ENCODE measurements at regions of chr6 and their contacts with region 1.

Region 1: GRCh38 chr6:13711733-13712598 is at the start of gene RANBP9:
- DNase-seq: peak; percentile 96
- total RNA-seq, gene RANBP9: 33.9 to 36.9 TPM

Region 2: GRCh38 chr6:13668291-13668928 is 43.6 kb before region 1 on chr6:
- intact Hi-C with region 1: no loop called
- DNase-seq: no peak

Region 3: DNA sequence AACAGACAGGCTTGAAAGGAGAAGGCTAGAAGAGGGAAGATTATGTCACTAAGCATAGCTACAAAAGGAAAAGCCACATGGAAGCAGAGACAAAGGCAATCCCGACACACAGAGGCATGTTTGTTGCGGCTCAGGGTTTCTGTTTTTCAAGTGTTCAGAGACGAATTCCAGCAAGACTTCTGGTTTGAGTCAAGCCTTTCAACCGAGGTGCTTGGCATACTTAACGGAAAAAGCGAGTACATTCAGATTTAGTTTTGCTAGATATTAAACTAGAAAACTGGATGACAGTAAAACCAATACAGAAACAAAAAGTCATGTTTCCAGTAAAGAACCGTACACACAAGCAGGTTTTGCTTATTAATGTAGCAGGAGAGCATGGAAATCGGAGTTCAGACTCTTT is 75.2 kb after region 1 on chr6:
- intact Hi-C with region 1: loop called in 1 of 2 experiments (anchors 10 kb)
- DNase-seq: no peak

Region 4: DNA sequence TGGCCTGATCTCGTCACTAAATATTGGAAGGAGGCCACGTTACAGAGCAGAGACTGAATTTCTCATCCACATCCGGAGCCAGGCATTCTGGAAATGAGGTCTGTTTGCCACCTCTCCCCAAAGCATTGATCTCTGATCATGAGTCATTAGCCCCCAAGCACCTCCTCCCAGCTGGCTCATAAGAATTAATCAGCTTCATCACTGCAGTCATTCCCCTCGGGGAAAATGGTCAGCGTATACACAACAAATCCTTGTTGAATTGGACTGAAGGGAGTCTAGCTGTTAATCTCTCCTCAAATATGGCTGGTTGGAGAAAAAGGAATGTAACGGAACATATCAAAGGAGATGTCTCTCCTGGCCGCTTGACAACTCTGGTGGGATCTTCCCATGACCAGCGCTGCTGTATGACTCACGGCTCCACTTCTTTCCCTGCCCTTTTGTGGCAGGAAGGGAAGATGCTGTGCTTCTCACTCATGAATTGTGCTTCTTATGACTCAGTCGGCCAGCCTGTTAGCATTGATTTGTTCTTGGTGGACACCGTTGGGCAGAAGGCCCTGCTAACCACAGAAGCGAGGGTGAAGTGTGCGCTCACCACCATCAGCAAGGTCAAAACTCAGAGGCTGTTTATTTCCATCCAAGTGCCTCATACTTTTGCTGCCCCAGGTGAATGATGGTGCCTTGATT is 289.5 kb after region 1 on chr6:
- intact Hi-C with region 1: no loop called
- DNase-seq: no peak

Region 5: DNA sequence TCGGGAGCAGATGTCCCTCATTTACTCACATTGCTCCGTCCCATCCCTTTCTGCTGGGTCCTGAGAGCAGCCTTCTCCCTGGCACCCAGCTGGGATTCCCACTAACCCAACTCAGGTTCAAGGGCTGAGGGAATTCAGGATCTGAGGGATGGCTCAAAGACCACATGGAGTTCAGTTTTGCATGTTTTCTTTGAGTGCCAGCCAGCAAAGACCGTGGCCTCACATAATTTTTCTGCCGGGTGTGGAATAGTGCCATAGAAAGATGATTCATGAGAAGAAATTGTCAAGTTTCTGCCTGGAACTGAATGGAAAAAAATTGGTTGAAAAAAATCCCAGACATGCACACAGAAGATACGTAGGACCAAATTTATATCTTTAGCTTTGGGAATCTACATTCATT is 574.2 kb after region 1 on chr6:
- intact Hi-C with region 1: no loop called
- DNase-seq: no peak